B cell (primary cell): ENCODE measurements at regions of chr1 and their contacts with region 1.

Region 1: DNA sequence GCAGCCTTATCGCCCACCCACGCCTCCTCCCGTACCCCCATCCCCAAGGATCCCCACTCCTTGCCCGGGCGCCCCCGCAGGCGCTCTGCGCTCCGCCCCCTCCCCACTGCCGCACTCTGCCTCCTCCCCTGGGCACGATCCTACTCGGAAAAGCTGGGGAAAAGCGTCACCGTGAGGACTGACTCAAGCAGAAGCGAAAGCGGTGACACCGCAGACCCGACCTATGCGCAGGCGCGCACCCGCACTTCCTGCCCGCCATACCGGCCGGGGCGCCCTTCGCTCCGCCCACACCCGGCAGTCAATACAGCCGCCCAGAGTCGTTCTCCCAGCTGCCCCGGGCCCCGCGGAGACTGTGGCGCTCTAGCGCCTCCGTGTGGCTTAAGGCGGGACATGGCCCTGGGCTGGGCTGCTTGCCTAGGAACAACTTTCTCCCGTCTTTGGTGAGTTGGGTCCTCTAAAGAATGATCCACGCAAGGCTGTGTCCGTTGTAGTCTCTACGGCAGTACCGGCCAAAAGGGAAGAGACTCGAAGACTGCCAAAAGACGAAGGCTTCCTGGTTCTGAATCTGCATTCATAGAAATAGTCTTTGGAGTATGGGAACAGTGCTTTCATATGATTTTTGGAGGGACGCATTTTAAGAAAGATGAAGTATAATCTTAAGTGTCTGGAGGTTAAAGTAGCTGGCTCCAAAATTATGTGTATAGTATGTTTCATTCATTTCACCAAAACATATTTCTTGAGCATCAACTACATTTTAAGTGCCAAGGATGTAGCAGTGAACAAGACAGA is at the start of gene OMA1:
- DNase-seq: peak; percentile 98
- ATAC-seq: peak; percentile 93
- H3K4me3 ChIP-seq: peak within 1 kb of the TSS; percentile 52 to 99 (median 83)
- H3K4me3 Mint-ChIP-seq: peak within 1 kb of the TSS; percentile 97
- H3K27ac ChIP-seq: peak within 1 kb of the TSS; percentile 96 to 97
- H3K27ac Mint-ChIP-seq: peak within 1 kb of the TSS; percentile 100
- H3K4me1 ChIP-seq: peaks cover 10 to 13% of the 10 kb centered on the region in 2 donors
- H3K4me1 Mint-ChIP-seq: peaks cover 17% of the 10 kb centered on the region
- H3K27me3 ChIP-seq: peaks cover 0 to 3% (median 0%) of the 10 kb centered on the region in 4 experiments
- H3K27me3 Mint-ChIP-seq: peaks cover 14% of the 10 kb centered on the region
- CTCF ChIP-seq: peak; percentile 94
- total RNA-seq, gene OMA1: 67.5 and 70.4 TPM in 2 replicates

Region 2: GRCh38 chr1:56831871-56832693 is 1714.6 kb before region 1 on chr1:
- CTCF ChIA-PET with region 1: interaction called, 15 read pairs
- POLR2A ChIA-PET with region 1: interaction called, 5 read pairs
- intact Hi-C with region 1: no loop called
- DNase-seq: peak; percentile 74
- ATAC-seq: peak; percentile 62
- H3K4me3 ChIP-seq: no peak overlapping the region
- H3K4me3 Mint-ChIP-seq: no peak overlapping the region
- H3K27ac ChIP-seq: no peak overlapping the region
- H3K27ac Mint-ChIP-seq: no peak overlapping the region
- H3K4me1 ChIP-seq: no peaks in the 10 kb centered on the region
- H3K4me1 Mint-ChIP-seq: peaks cover 2% of the 10 kb centered on the region
- H3K27me3 ChIP-seq: no peaks in the 10 kb centered on the region
- H3K27me3 Mint-ChIP-seq: peaks cover 25% of the 10 kb centered on the region
- CTCF ChIP-seq: peak; percentile 98

Region 3: GRCh38 chr1:58392083-58392482 is 154.6 kb before region 1 on chr1:
- CTCF ChIA-PET with region 1: interaction called, 3 read pairs
- POLR2A ChIA-PET with region 1: interaction called, 4 read pairs
- intact Hi-C with region 1: loop called (anchors 1 kb)
- DNase-seq: peak; percentile 62
- ATAC-seq: peak; percentile 94
- H3K4me3 ChIP-seq: no peak overlapping the region
- H3K4me3 Mint-ChIP-seq: no peak overlapping the region
- H3K27ac ChIP-seq: no peak overlapping the region
- H3K27ac Mint-ChIP-seq: no peak overlapping the region
- H3K4me1 ChIP-seq: peaks cover 21 to 23% of the 10 kb centered on the region in 2 donors
- H3K4me1 Mint-ChIP-seq: no peaks in the 10 kb centered on the region
- H3K27me3 ChIP-seq: no peaks in the 10 kb centered on the region
- H3K27me3 Mint-ChIP-seq: no peaks in the 10 kb centered on the region
- CTCF ChIP-seq: no peak

Region 4: GRCh38 chr1:58515794-58516401 is 30.8 kb before region 1 on chr1:
- CTCF ChIA-PET with region 1: interaction called, 103 read pairs
- POLR2A ChIA-PET with region 1: interaction called, 7 read pairs
- intact Hi-C with region 1: loop called (anchors 1 kb)
- DNase-seq: peak; percentile 76
- ATAC-seq: peak; percentile 51
- H3K4me3 ChIP-seq: no peak overlapping the region
- H3K4me3 Mint-ChIP-seq: no peak overlapping the region
- H3K27ac ChIP-seq: peak overlapping the region in 1 of 2 donors; percentile 9
- H3K27ac Mint-ChIP-seq: peak overlapping the region; percentile 46
- H3K4me1 ChIP-seq: no peaks in the 10 kb centered on the region
- H3K4me1 Mint-ChIP-seq: no peaks in the 10 kb centered on the region
- H3K27me3 ChIP-seq: no peaks in the 10 kb centered on the region
- H3K27me3 Mint-ChIP-seq: no peaks in the 10 kb centered on the region
- CTCF ChIP-seq: peak; percentile 90

Region 5: GRCh38 chr1:58584082-58584895 is 37.6 kb after region 1 on chr1:
- CTCF ChIA-PET with region 1: no interaction called
- POLR2A ChIA-PET with region 1: no interaction called
- intact Hi-C with region 1: no loop called
- DNase-seq: no peak
- ATAC-seq: no peak
- H3K4me3 ChIP-seq: no peak overlapping the region
- H3K4me3 Mint-ChIP-seq: no peak overlapping the region
- H3K27ac ChIP-seq: no peak overlapping the region
- H3K27ac Mint-ChIP-seq: no peak overlapping the region
- H3K4me1 ChIP-seq: no peaks in the 10 kb centered on the region
- H3K4me1 Mint-ChIP-seq: peaks cover 7% of the 10 kb centered on the region
- H3K27me3 ChIP-seq: peaks cover 0 to 14% (median 7%) of the 10 kb centered on the region in 4 experiments
- H3K27me3 Mint-ChIP-seq: peaks cover 39% of the 10 kb centered on the region
- CTCF ChIP-seq: no peak

Region 6: DNA sequence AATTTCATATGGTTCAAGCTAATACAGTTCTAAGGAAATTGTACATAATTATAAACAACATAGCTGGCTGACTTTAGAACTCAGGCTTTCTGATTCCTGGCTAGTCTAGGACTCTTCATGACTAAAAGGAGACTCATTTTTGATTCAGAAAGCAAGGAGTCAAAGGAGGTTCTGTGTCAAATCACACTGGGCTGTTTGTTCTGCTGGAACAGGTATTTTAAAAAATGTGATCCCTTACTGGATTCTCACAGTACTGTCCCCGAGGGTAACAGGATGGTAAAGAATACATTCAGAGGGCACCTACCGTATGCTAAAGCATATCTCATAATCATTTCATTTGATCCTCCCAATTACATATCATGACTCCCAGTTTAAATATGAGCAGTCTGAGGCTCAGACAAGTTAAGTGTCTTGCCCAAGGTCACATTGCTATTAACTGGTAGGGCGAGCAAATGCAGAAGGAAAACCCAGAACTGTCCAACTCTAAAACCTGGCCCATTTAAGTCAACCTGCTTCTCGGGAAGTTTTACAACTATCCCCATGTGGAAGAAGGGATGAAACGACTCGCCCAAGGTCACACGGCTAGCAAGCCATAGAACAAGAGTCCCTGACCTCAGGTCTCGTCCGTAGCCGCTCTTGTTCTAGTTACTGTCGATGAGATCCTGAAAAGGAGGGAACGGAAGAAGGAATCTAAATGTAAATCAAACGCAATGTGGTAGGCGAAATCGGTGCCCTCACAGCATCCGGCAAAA is 152.5 kb after region 1 on chr1:
- CTCF ChIA-PET with region 1: no interaction called
- POLR2A ChIA-PET with region 1: no interaction called
- intact Hi-C with region 1: loop called (anchors 1 kb)
- DNase-seq: no peak
- ATAC-seq: no peak
- H3K4me3 ChIP-seq: peak overlapping the region; percentile 61 to 99 (median 93)
- H3K4me3 Mint-ChIP-seq: peak overlapping the region; percentile 96
- H3K27ac ChIP-seq: peak overlapping the region; percentile 79 to 90
- H3K27ac Mint-ChIP-seq: peak overlapping the region; percentile 98
- H3K4me1 ChIP-seq: peaks cover 14 to 17% of the 10 kb centered on the region in 2 donors
- H3K4me1 Mint-ChIP-seq: peaks cover 23% of the 10 kb centered on the region
- H3K27me3 ChIP-seq: no peaks in the 10 kb centered on the region
- H3K27me3 Mint-ChIP-seq: no peaks in the 10 kb centered on the region
- CTCF ChIP-seq: no peak

Region 7: DNA sequence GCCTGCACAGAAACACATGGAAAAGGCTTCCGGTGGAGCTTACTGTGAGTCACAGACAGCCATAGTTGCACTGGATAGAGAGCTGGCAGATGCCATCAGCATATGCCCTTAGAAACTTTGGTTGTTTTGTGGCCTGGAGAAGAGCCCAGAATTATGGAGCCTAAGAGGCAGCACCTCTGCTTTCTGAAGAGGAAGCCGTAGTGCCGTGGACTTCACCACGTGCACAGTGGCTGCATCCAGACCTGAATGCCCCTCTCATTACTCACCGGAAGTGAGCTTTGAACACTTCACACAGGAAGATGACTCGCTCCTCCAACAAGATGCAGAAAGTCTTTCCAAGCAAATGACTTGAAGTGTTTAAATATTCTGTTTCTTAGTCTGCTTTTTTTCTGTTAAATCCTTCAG is 208.8 kb after region 1 on chr1:
- CTCF ChIA-PET with region 1: no interaction called
- POLR2A ChIA-PET with region 1: no interaction called
- intact Hi-C with region 1: no loop called
- DNase-seq: peak; percentile 14
- ATAC-seq: peak; percentile 58
- H3K4me3 ChIP-seq: no peak overlapping the region
- H3K4me3 Mint-ChIP-seq: no peak overlapping the region
- H3K27ac ChIP-seq: no peak overlapping the region
- H3K27ac Mint-ChIP-seq: peak overlapping the region; percentile 12
- H3K4me1 ChIP-seq: peaks cover 7 to 12% of the 10 kb centered on the region in 2 donors
- H3K4me1 Mint-ChIP-seq: peaks cover 14% of the 10 kb centered on the region
- H3K27me3 ChIP-seq: no peaks in the 10 kb centered on the region
- H3K27me3 Mint-ChIP-seq: no peaks in the 10 kb centered on the region
- CTCF ChIP-seq: no peak

Region 8: DNA sequence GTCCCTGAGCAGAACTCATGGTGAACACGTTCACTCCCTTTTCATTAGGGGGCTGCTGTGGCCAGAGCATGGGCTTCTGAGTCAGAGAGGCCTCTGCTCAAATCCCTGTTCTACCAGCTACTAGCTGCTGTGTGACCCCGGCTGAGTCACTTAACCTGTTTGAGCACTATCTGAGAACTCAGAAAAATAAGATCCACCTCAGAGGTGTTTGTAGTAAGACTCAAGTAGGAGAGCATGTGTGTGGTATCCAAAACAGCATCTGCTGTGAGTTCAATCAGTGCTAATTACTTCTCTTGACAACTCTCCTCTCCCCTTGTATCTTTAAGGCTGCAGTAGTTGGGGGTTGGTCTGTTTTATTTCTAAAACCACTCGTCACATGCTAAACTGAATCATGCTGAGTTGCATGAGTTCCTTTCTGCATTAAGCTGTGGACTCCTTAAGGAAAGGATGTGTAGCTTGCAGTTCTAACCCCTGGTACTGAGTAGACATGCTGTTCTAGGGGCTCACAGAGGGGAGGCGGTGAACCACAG is 276.8 kb after region 1 on chr1:
- CTCF ChIA-PET with region 1: no interaction called
- POLR2A ChIA-PET with region 1: interaction called, 11 read pairs
- intact Hi-C with region 1: no loop called
- DNase-seq: no peak
- ATAC-seq: no peak
- H3K4me3 ChIP-seq: no peak overlapping the region
- H3K4me3 Mint-ChIP-seq: no peak overlapping the region
- H3K27ac ChIP-seq: no peak overlapping the region
- H3K27ac Mint-ChIP-seq: no peak overlapping the region
- H3K4me1 ChIP-seq: no peaks in the 10 kb centered on the region
- H3K4me1 Mint-ChIP-seq: peaks cover 8% of the 10 kb centered on the region
- H3K27me3 ChIP-seq: no peaks in the 10 kb centered on the region
- H3K27me3 Mint-ChIP-seq: no peaks in the 10 kb centered on the region
- CTCF ChIP-seq: no peak

Region 9: GRCh38 chr1:59814180-59814900 is 1267.6 kb after region 1 on chr1:
- CTCF ChIA-PET with region 1: no interaction called
- POLR2A ChIA-PET with region 1: no interaction called
- intact Hi-C with region 1: loop called (anchors 10 kb)
- DNase-seq: peak; percentile 95
- ATAC-seq: peak; percentile 93
- H3K4me3 ChIP-seq: peak overlapping the region; percentile 15 to 74 (median 66)
- H3K4me3 Mint-ChIP-seq: no peak overlapping the region
- H3K27ac ChIP-seq: peak overlapping the region; percentile 31 to 65
- H3K27ac Mint-ChIP-seq: peak overlapping the region; percentile 89
- H3K4me1 ChIP-seq: peaks cover 11 to 17% of the 10 kb centered on the region in 2 donors
- H3K4me1 Mint-ChIP-seq: peaks cover 4% of the 10 kb centered on the region
- H3K27me3 ChIP-seq: peaks cover 0 to 8% (median 0%) of the 10 kb centered on the region in 4 experiments
- H3K27me3 Mint-ChIP-seq: peaks cover 12% of the 10 kb centered on the region
- CTCF ChIP-seq: no peak